Endothelial cell of umbilical vein (primary cell): ENCODE measurements at regions of chr10 and their contacts with region 1.

Region 1: GRCh38 chr10:124418726-124419501 is at the start of gene OAT:
- DNase-seq: peak; percentile 96
- H3K4me3 ChIP-seq: peak within 1 kb of the TSS; percentile 75 to 86 (median 77)
- H3K27ac ChIP-seq: peak within 1 kb of the TSS; percentile 55
- H3K4me1 ChIP-seq: peaks cover 2% of the 10 kb centered on the region
- H3K27me3 ChIP-seq: peaks cover 0 to 6% of the 10 kb centered on the region in 2 experiments
- CTCF ChIP-seq: peak in 1 of 2 donors; percentile 31
- POLR2A ChIP-seq: peak; percentile 99
- total RNA-seq, gene OAT: 90.1 and 90.8 TPM in 2 replicates

Region 2: DNA sequence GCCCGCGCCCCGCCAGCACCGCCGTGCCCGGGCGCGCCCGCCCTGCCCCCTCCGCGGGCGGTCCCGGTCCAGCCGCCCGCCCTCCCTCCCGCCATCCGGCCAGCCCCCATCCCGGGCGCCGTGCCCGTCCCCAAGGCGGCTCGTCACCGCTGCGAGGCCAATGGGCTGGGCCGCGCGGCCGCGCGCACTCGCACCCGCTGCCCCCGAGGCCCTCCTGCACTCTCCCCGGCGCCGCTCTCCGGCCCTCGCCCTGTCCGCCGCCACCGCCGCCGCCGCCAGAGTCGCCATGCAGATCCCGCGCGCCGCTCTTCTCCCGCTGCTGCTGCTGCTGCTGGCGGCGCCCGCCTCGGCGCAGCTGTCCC is 1957.6 kb before region 1 on chr10 and contains the start of gene HTRA1:
- CTCF ChIA-PET with region 1: no interaction called
- POLR2A ChIA-PET with region 1: no interaction called
- dilution Hi-C with region 1: no loop called
- intact Hi-C with region 1: loop called (anchors 10 kb)
- DNase-seq: peak; percentile 67
- H3K4me3 ChIP-seq: peak within 1 kb of the TSS; percentile 71 to 92 (median 88)
- H3K27ac ChIP-seq: peak within 1 kb of the TSS; percentile 46
- H3K4me1 ChIP-seq: peaks cover 14% of the 10 kb centered on the region
- H3K27me3 ChIP-seq: no peaks in the 10 kb centered on the region
- CTCF ChIP-seq: no peak
- POLR2A ChIP-seq: peak; percentile 58
- total RNA-seq, gene HTRA1: 192 and 255 TPM in 2 replicates

Region 3: DNA sequence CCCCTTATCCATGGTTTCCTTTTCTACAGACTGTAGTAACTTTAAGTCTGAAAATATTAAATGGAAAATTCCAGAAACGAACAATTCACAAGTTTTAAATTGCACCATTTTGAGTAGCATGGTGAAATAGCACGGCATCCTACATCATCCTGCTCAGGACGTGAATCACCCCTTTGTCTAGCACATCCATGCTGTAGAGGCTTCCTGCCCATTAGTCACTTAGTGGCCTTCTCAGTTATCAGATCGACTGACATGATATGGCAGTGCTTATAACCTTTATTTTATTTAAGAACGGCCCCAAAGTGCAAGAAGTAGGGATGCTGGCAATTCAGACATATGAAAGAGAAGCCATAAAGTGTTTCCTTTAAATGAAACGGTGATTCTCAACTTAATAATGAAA is 610.0 kb before region 1 on chr10:
- CTCF ChIA-PET with region 1: no interaction called
- POLR2A ChIA-PET with region 1: no interaction called
- dilution Hi-C with region 1: no loop called
- intact Hi-C with region 1: loop called (anchors 10 kb)
- DNase-seq: peak; percentile 92
- H3K4me3 ChIP-seq: no peak overlapping the region
- H3K27ac ChIP-seq: peak overlapping the region; percentile 89
- H3K4me1 ChIP-seq: peaks cover 32% of the 10 kb centered on the region
- H3K27me3 ChIP-seq: no peaks in the 10 kb centered on the region
- CTCF ChIP-seq: no peak
- POLR2A ChIP-seq: no peak

Region 4: DNA sequence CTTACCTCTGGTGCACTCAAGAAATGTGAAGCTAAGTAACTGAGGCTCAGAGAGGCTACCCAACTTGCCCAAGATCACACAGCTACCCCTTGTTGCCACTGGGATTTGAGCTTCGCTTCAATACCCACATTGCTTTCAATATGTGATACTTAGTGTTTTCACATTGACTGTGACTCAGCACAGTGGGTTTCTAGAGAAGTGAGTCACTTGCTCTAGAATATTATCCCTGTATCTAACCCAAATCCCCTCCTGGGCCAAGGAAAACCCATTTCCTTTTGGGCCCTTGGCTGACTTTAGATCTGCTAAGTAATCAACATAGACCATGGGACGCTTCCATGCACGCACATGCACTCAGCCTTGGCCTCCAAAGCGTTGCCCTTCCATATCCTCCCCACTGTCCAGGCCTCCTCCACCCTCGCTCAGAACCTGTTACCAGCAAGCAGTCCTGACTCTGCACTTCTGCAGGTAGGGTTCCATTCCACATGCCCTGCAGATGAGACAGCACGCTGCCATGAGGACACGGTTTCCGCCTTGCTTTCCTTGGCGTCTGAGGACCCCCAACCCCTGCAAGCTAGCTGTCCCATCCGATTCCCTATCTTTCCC is 237.9 kb before region 1 on chr10:
- CTCF ChIA-PET with region 1: no interaction called
- POLR2A ChIA-PET with region 1: no interaction called
- dilution Hi-C with region 1: no loop called
- intact Hi-C with region 1: no loop called
- DNase-seq: no peak
- H3K4me3 ChIP-seq: no peak overlapping the region
- H3K27ac ChIP-seq: no peak overlapping the region
- H3K4me1 ChIP-seq: no peaks in the 10 kb centered on the region
- H3K27me3 ChIP-seq: peaks cover 0 to 2% of the 10 kb centered on the region in 2 experiments
- CTCF ChIP-seq: no peak
- POLR2A ChIP-seq: no peak

Region 5: DNA sequence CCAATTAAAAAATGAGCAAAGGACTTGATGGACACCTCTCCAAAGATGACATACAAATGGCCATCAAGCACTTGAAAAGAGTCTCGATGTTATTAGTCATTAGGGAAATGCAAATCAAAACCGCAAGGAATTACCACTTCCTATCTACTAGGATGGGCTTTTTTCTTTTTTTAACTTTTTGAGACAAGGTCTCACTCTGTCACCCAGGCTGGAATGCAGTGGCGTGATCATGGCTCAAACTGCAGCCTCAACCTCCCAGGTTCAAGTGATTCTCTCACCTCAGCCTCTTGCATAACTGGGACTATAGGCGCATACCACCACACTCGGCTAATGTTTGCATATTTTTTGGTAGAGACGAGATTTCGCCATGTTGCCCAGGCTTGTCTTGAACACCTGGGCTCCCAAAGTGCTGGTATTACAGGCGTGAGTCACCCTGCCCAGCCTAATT is 17.3 kb after region 1 on chr10:
- CTCF ChIA-PET with region 1: no interaction called
- POLR2A ChIA-PET with region 1: interaction called, 10 read pairs
- dilution Hi-C with region 1: no loop called
- intact Hi-C with region 1: no loop called
- DNase-seq: no peak
- H3K4me3 ChIP-seq: no peak overlapping the region
- H3K27ac ChIP-seq: no peak overlapping the region
- H3K4me1 ChIP-seq: no peaks in the 10 kb centered on the region
- H3K27me3 ChIP-seq: peaks cover 0 to 2% of the 10 kb centered on the region in 2 experiments
- CTCF ChIP-seq: no peak
- POLR2A ChIP-seq: no peak

Region 6: DNA sequence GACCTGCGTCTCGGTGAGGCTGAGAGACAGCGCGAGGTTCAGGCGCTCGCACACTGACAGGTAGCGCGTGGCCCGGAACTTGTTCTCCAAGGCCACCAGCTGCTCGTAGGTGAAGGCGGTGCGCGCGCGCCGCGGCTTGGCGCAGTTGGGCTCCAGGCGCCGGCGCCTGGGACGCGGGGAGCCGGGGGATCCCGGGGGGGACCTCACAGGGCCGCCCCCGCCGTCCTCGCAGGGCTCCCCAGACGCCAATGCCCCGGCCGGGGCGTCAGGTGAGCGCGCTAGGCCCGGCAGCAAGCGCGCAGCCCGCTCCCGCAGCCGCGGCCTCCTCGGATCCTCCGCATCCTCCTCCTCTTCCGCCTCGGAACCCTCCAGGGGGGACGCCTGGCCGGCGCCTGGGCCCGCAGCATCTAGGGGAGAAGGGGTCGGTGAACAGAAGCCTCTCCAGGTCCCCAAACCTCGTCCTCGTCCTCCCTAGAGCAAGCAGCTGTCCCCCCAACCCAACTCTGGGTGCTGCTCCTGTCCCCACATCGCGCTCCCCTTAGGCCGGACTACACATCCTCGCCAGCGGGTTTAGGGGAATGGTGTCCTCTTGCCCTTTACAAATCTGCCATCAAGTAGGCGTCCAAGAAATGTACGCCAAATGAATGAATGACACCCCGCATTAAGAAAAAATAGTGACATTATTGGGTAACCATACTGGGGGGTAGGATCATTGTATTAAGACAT is 29.0 kb after region 1 on chr10:
- CTCF ChIA-PET with region 1: no interaction called
- POLR2A ChIA-PET with region 1: no interaction called
- dilution Hi-C with region 1: no loop called
- intact Hi-C with region 1: no loop called
- DNase-seq: no peak
- H3K4me3 ChIP-seq: no peak overlapping the region
- H3K27ac ChIP-seq: no peak overlapping the region
- H3K4me1 ChIP-seq: peaks cover 2% of the 10 kb centered on the region
- H3K27me3 ChIP-seq: peaks cover 70 to 85% of the 10 kb centered on the region in 2 experiments
- CTCF ChIP-seq: no peak
- POLR2A ChIP-seq: no peak

Region 7: DNA sequence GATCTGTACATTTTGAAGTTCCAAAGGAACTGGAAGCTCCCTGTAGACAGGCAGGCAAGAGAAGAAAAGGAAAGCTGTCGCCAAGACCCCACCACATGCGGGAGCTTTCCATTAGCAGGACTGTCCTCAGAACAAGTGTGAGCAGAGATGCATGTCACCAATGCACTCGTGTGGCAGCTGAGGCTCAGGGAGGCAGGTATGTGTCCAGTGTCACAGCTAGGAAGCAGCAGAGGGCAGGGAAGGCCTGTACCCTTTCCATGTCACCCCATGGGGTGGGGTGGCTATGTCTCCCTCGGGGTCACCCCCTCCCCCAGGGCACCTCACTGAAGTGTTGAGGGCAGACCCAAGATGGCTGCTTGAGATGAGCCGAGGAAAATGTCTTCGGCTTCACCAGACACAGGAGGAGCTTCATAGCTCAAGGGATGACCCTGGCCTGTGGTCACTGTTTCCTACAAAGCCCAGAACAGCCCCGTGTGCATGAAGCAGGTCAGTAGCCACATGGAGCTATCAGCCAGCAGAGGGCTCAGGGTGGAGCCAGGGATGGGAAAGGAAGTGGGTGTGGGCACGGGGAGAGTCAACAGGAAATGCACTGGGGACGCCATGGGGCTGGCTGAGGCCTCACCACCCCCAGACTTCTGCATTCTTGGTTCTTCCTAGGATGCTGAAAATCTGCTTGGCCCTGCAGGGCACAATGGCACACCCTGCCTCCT is 228.7 kb after region 1 on chr10:
- CTCF ChIA-PET with region 1: no interaction called
- POLR2A ChIA-PET with region 1: no interaction called
- dilution Hi-C with region 1: no loop called
- intact Hi-C with region 1: loop called (anchors 2 kb)
- DNase-seq: peak; percentile 46
- H3K4me3 ChIP-seq: no peak overlapping the region
- H3K27ac ChIP-seq: peak overlapping the region; percentile 36
- H3K4me1 ChIP-seq: peaks cover 35% of the 10 kb centered on the region
- H3K27me3 ChIP-seq: no peaks in the 10 kb centered on the region
- CTCF ChIP-seq: peak; percentile 25
- POLR2A ChIP-seq: no peak